Activated CD4-positive, alpha-beta T cell treated with anti-CD3 and anti-CD28 coated beads for 36 hours (primary cell): ENCODE measurements at regions of chr9 and their contacts with region 1.

Region 1: DNA sequence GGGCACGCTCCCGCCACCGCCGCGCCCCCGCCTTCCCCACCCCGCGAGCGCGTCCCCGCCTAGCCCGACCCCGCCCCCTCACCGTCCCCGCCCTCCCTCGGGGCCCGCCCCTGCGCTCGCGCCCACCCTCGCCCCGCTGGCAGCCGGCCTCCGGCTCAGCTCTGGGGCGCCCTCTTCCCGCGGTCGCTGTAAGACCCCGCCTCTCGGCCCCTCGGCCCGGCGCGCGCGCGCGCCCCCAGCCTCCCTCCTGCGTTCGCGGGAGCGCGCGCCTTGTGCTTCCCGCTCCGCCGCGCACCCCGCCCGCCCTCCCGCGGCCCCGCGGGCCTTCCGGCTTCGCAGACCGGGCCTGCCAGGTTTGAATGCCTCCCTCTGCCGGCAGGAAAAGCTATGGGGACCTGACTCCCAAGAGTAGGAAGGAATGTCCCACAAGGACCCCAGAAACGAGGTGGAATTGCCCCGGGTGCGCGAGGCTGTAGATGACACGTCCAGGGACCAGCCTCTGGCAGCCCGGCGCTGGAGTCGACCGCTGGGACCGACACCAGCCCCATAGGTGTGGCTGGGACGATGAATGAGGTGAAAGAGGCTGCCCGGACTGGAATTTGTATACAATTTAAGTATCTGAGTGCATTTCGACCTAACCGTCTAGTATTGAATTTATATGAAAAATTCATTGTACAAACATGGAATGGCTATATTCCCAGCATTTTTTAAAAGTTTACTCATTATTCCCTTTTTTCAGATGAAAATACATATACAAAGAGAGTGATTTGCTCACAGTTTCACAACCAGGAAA is 416 bp upstream of the PTBP3 start:
- DNase-seq: peak; percentile 97
- ATAC-seq: peak; percentile 84
- H3K4me3 Mint-ChIP-seq: peak overlapping the region; percentile 89
- H3K27ac Mint-ChIP-seq: peak overlapping the region; percentile 98
- H3K4me1 Mint-ChIP-seq: peaks cover 33% of the 10 kb centered on the region
- H3K27me3 Mint-ChIP-seq: no peaks in the 10 kb centered on the region

Region 2: DNA sequence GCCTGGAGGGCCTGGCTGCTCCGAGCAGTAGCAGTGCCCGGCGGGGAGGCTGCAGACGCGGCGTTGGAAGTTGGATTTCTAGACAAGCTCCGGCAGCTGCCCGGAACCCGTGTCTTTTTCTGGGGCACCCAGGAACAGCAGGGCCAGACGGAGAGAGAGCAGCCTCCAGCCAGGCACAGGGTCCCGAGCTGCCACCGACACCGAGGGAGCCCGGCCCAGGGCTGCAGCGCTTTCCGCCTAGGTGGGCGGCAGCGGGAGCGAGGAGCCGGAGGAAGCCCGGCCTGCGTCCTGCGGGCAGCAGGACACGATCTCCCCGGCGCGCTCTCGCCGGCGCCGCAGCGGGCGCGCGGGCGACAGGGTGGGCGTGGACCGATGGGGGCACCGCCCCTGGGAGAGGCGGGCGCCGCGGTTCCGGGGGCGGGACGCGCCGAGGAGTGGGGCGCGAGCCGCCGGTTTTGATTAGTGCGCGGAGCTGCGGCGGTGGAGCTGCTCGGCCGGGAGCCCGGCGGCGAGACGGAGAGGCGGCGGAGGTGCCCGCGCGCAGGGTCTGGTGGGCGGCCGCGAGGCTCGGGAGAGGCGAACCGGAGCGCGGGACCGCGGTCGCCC is 437.4 kb before region 1 on chr9 and contains the start of gene UGCG:
- CTCF ChIA-PET with region 1: no interaction called
- POLR2A ChIA-PET with region 1: interaction called, 3 read pairs
- intact Hi-C with region 1: loop called in 1 of 2 experiments (anchors 1 kb)
- DNase-seq: peak; percentile 94
- ATAC-seq: peak; percentile 88
- H3K4me3 Mint-ChIP-seq: no peak within 1 kb of the TSS
- H3K27ac Mint-ChIP-seq: peak within 1 kb of the TSS; percentile 90
- H3K4me1 Mint-ChIP-seq: peaks cover 25% of the 10 kb centered on the region
- H3K27me3 Mint-ChIP-seq: no peaks in the 10 kb centered on the region
- total RNA-seq, gene UGCG: 12.7 to 14.2 TPM

Region 3: DNA sequence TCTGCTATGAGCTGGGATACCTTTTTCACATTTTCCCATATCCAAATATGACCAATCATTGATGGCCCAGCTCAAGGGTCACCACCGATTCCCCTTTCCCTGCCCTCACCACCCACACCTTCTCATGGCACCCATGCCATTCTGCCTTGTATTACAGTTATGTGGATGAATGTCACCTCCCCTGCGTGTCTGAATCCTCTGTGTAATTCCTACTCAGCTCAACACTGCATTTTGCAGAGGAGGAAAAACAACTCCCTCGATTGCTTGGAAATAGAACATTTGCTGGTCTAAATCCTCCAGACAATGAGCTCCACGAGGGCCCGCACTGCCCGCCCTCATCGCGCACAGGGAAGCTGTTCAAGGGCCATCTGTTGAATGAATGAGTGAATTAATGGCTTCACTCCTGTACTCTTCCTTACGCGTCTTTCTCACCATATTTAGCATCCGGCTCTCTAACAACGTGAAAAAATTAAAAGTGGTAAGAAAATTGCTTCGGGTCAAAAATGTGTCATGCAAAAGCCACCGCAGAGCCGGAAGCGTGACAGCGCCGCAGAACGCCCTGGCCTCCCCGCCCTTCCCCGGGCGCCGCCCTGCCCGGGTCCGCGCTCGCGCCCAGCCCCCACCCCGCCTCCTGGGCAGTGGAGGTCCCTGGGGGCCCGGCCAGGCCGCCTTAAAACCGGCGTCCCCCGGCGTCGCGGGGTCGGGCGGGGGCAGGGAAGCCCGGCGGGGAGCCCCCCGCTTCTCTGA is 159.4 kb before region 1 on chr9:
- CTCF ChIA-PET with region 1: no interaction called
- POLR2A ChIA-PET with region 1: interaction called, 4 read pairs
- intact Hi-C with region 1: loop called (anchors 1 to 2 kb)
- DNase-seq: peak; percentile 87
- ATAC-seq: peak; percentile 87
- H3K4me3 Mint-ChIP-seq: peak overlapping the region; percentile 75
- H3K27ac Mint-ChIP-seq: peak overlapping the region; percentile 92
- H3K4me1 Mint-ChIP-seq: peaks cover 38% of the 10 kb centered on the region
- H3K27me3 Mint-ChIP-seq: peaks cover 11% of the 10 kb centered on the region

Region 4: GRCh38 chr9:112299514-112299913 is 34.3 kb before region 1 on chr9:
- CTCF ChIA-PET with region 1: no interaction called
- POLR2A ChIA-PET with region 1: interaction called, 3 read pairs
- intact Hi-C with region 1: loop called in 1 of 2 experiments (anchors 5 kb)
- DNase-seq: no peak
- ATAC-seq: no peak
- H3K4me3 Mint-ChIP-seq: no peak overlapping the region
- H3K27ac Mint-ChIP-seq: no peak overlapping the region
- H3K4me1 Mint-ChIP-seq: peaks cover 40% of the 10 kb centered on the region
- H3K27me3 Mint-ChIP-seq: no peaks in the 10 kb centered on the region

Region 5: GRCh38 chr9:112379177-112380101 is 45.6 kb after region 1 on chr9:
- CTCF ChIA-PET with region 1: interaction called, 6 read pairs
- POLR2A ChIA-PET with region 1: interaction called, 7 read pairs
- intact Hi-C with region 1: loop called in 1 of 2 experiments (anchors 1 kb)
- DNase-seq: peak; percentile 99
- ATAC-seq: peak; percentile 93
- H3K4me3 Mint-ChIP-seq: peak overlapping the region; percentile 98
- H3K27ac Mint-ChIP-seq: peak overlapping the region; percentile 100
- H3K4me1 Mint-ChIP-seq: peaks cover 42% of the 10 kb centered on the region
- H3K27me3 Mint-ChIP-seq: no peaks in the 10 kb centered on the region

Region 6: GRCh38 chr9:113221003-113221799 is 887.4 kb after region 1 on chr9 and contains the starts of genes FKBP15 and SLC31A1:
- CTCF ChIA-PET with region 1: no interaction called
- POLR2A ChIA-PET with region 1: no interaction called
- intact Hi-C with region 1: loop called in 1 of 2 experiments (anchors 1 kb)
- DNase-seq: peak; percentile 98
- ATAC-seq: peak; percentile 97
- H3K4me3 Mint-ChIP-seq: peak within 1 kb of the TSS; percentile 89
- H3K27ac Mint-ChIP-seq: peak within 1 kb of the TSS; percentile 93
- H3K4me1 Mint-ChIP-seq: peaks cover 46% of the 10 kb centered on the region
- H3K27me3 Mint-ChIP-seq: no peaks in the 10 kb centered on the region
- total RNA-seq, gene FKBP15: 34.0 to 44.2 TPM
- total RNA-seq, gene SLC31A1: 14.8 to 18.2 TPM